ENCODE measurements at regions of chr18 and their contacts with region 1.

Region 1: GRCh38 chr18:76803814-76804213 is 18.5 kb upstream of the ZNF236 start:
- DNase-seq: no peak
- ATAC-seq: peak; percentile 74
- H3K4me3 ChIP-seq: peak overlapping the region; percentile 10 to 50; a peak in 2 of 4 replicates
- H3K27ac ChIP-seq: no peak overlapping the region
- H3K4me1 ChIP-seq: peaks cover 13 to 32% of the 10 kb centered on the region in 2 experiments
- H3K27me3 ChIP-seq: no peaks in the 10 kb centered on the region
- CTCF ChIP-seq: peak; percentile 82 to 88 (median 84)
- POLR2A ChIP-seq: no peak
- RAD21 ChIP-seq: peak; percentile 80

Region 2: DNA sequence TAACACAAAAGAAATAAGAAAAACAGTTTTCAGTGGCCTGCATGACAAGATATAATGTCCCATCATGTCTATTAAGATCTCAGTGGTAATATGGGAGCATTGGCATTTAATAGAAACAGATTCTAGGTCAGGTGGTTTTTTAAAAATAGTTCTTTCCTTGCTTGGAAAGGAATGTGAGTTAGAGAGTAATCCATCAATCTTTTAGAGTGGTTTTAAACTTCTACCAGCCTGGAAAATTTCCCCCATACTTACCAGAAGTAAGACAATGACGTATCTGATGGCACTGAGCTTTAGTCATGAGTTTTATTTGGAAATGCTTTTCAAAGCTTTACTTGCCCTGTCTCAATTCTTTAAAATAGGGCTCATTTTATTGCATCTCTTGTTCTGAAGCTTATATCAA is 934.7 kb before region 1 on chr18:
- CTCF ChIA-PET with region 1: no interaction called
- POLR2A ChIA-PET with region 1: no interaction called
- RAD21 ChIA-PET with region 1: no interaction called
- intact Hi-C with region 1: no loop called
- DNase-seq: no peak
- ATAC-seq: no peak
- H3K4me3 ChIP-seq: no peak overlapping the region
- H3K27ac ChIP-seq: no peak overlapping the region
- H3K4me1 ChIP-seq: no peaks in the 10 kb centered on the region
- H3K27me3 ChIP-seq: 0 out of 2 replicates have a peak, but pooled peaks cover 6% of the 10 kb centered on the region
- CTCF ChIP-seq: no peak
- POLR2A ChIP-seq: no peak
- RAD21 ChIP-seq: no peak

Region 3: DNA sequence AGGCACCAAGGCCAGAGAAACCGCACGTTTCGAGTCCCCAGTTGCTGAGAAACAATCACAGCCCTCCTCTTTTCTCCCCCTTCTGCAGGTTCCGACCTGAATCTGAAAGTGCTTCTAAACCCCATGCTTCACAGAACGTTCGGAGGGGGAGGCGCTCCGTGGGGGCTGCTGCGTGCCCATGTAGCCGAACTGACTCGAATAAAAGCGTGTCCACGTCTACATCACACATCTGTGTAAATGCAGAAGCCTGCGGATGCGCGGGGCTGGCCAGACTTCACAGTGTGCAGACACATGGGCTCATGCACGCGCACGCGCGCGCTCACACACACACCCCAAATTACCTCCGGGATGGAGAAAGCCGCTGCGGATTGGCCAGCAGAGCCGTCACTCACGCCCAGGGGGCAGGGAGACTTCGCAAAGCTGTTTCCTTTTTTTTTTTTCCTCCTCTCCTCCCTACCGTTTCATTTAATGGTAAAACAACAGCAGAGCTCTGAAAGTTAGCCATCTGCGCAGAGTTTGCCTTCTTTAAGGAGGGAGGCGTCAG is 311.1 kb before region 1 on chr18:
- CTCF ChIA-PET with region 1: no interaction called
- POLR2A ChIA-PET with region 1: no interaction called
- RAD21 ChIA-PET with region 1: no interaction called
- intact Hi-C with region 1: loop called (anchors 10 kb)
- DNase-seq: peak; percentile 97
- ATAC-seq: peak; percentile 66
- H3K4me3 ChIP-seq: peak overlapping the region; percentile 68 to 76
- H3K27ac ChIP-seq: peak overlapping the region; percentile 47
- H3K4me1 ChIP-seq: peaks cover 0 to 37% of the 10 kb centered on the region in 2 experiments; a peak in 2 of 4 replicates
- H3K27me3 ChIP-seq: no peaks in the 10 kb centered on the region
- CTCF ChIP-seq: no peak
- POLR2A ChIP-seq: peak; percentile 53
- RAD21 ChIP-seq: no peak

Region 4: GRCh38 chr18:76875390-76876325 is 71.8 kb after region 1 on chr18:
- CTCF ChIA-PET with region 1: no interaction called
- POLR2A ChIA-PET with region 1: no interaction called
- RAD21 ChIA-PET with region 1: no interaction called
- intact Hi-C with region 1: loop called (anchors 2 kb)
- DNase-seq: peak; percentile 28
- ATAC-seq: peak; percentile 92
- H3K4me3 ChIP-seq: no peak overlapping the region
- H3K27ac ChIP-seq: no peak overlapping the region
- H3K4me1 ChIP-seq: 0 out of 4 replicates have a peak, but pooled peaks cover 0 to 3% of the 10 kb centered on the region in 2 experiments
- H3K27me3 ChIP-seq: no peaks in the 10 kb centered on the region
- CTCF ChIP-seq: peak; percentile 48 to 86 (median 82); a peak in 5 of 6 replicates
- POLR2A ChIP-seq: no peak
- RAD21 ChIP-seq: peak; percentile 67

Region 5: DNA sequence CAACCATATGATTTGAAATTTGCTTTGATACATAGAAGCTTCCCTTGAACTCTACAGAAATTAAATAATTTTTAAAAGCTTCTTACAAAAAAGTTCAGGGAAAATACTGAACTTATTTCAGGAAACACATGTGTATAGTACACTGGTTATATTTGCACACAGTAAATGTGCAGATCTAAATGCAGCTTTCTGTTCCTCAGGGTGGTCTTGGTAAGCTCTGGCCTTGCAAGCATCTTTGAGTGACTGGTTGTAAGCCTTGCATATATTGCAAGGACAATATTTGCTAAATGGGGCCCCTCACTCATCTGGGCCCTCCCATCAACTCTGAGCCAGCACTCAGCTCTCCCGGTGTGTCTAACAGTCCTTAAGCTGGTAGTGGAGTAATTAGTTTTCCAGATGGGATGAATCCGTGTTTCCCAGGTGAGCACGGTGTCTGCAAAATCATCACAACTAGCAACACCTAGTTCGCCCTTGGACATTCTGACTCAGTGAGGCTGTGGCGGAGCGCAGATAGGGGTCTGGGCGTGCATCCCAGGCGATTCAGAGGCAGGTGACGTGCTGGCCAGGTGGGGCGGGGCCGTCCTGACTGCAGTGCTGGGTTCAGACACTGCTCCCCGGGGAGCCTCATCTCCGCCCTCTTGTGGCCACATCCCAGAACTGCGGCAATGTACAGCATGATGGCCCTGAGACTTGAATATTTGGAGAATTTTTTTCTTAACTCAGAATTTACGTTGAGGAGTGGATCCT is 179.2 kb after region 1 on chr18:
- CTCF ChIA-PET with region 1: interaction called, 16 read pairs
- POLR2A ChIA-PET with region 1: no interaction called
- RAD21 ChIA-PET with region 1: no interaction called
- intact Hi-C with region 1: loop called (anchors 1 kb)
- DNase-seq: peak; percentile 67
- ATAC-seq: peak; percentile 99
- H3K4me3 ChIP-seq: no peak overlapping the region
- H3K27ac ChIP-seq: no peak overlapping the region
- H3K4me1 ChIP-seq: peaks cover 2 to 5% of the 10 kb centered on the region in 2 experiments; a peak in 3 of 4 replicates
- H3K27me3 ChIP-seq: no peaks in the 10 kb centered on the region
- CTCF ChIP-seq: peak; percentile 83 to 93 (median 87)
- POLR2A ChIP-seq: no peak
- RAD21 ChIP-seq: peak; percentile 77

Region 6: GRCh38 chr18:77207540-77207939 is 403.7 kb after region 1 on chr18:
- CTCF ChIA-PET with region 1: interaction called, 7 read pairs
- POLR2A ChIA-PET with region 1: no interaction called
- RAD21 ChIA-PET with region 1: no interaction called
- intact Hi-C with region 1: loop called (anchors 10 kb)
- DNase-seq: peak; percentile 51
- ATAC-seq: peak; percentile 94
- H3K4me3 ChIP-seq: no peak overlapping the region
- H3K27ac ChIP-seq: no peak overlapping the region
- H3K4me1 ChIP-seq: peaks cover 8 to 14% of the 10 kb centered on the region in 2 experiments
- H3K27me3 ChIP-seq: no peaks in the 10 kb centered on the region
- CTCF ChIP-seq: peak; percentile 61 to 88 (median 82); a peak in 5 of 6 replicates
- POLR2A ChIP-seq: no peak
- RAD21 ChIP-seq: 0 out of 2 replicates have a peak, but pooled peaks have one; percentile 17

Measured in HCT116 (cell line).